ENCODE measurements at regions of chr2 and their contacts with region 1.

Region 1: DNA sequence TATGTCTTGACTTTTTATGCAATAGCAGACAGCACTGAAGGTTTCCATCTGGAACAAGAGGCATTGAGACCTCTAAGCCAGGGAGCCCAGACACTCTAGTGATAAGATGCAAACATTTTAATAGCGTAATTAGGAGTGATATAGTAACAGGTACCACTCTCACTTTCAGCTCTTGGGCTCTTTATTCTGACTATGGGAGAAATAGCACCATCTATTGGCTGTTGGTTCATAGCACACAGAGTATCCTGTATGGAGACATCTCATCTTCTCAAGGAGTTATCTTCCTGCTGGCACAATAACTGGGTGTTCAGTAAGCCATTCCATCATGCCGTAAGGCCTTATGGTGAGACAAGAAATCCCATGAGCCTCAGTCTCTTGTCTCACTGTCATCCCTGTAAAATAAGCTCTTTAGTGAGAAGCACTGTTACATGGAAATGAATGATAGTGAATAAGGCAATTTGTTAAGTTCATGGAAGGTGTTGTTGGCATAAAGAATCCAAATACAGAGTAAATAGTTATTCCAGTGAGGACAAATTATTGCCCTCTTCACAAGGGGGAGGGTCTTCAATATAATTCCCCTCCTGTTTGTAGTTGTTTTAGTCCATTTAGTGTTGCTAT is 48.3 kb downstream of the THUMPD2 start:
- DNase-seq: peak in 1 of 9 experiments; percentile 17
- ATAC-seq: no peak
- H3K4me3 ChIP-seq: no peak overlapping the region
- H3K4me3 Mint-ChIP-seq: no peak overlapping the region
- H3K27ac ChIP-seq: no peak overlapping the region
- H3K27ac Mint-ChIP-seq: no peak overlapping the region
- H3K4me1 ChIP-seq: no peaks in the 10 kb centered on the region
- H3K4me1 Mint-ChIP-seq: no peaks in the 10 kb centered on the region
- H3K27me3 ChIP-seq: no peaks in the 10 kb centered on the region
- H3K27me3 Mint-ChIP-seq: no peaks in the 10 kb centered on the region
- CTCF ChIP-seq: no peak

Region 2: GRCh38 chr2:39069136-39069515 is 661.7 kb before region 1 on chr2:
- CTCF ChIA-PET with region 1: no interaction called
- POLR2A ChIA-PET with region 1: no interaction called
- intact Hi-C with region 1: loop called in 1 of 2 experiments (anchors 10 kb)
- DNase-seq: peak in 2 of 9 experiments; percentile 10 to 26
- ATAC-seq: peak; percentile 31
- H3K4me3 ChIP-seq: no peak overlapping the region
- H3K4me3 Mint-ChIP-seq: no peak overlapping the region
- H3K27ac ChIP-seq: no peak overlapping the region
- H3K27ac Mint-ChIP-seq: peak overlapping the region; percentile 32
- H3K4me1 ChIP-seq: no peaks in the 10 kb centered on the region
- H3K4me1 Mint-ChIP-seq: peaks cover 31% of the 10 kb centered on the region
- H3K27me3 ChIP-seq: no peaks in the 10 kb centered on the region
- H3K27me3 Mint-ChIP-seq: no peaks in the 10 kb centered on the region
- CTCF ChIP-seq: peak; percentile 24

Region 3: DNA sequence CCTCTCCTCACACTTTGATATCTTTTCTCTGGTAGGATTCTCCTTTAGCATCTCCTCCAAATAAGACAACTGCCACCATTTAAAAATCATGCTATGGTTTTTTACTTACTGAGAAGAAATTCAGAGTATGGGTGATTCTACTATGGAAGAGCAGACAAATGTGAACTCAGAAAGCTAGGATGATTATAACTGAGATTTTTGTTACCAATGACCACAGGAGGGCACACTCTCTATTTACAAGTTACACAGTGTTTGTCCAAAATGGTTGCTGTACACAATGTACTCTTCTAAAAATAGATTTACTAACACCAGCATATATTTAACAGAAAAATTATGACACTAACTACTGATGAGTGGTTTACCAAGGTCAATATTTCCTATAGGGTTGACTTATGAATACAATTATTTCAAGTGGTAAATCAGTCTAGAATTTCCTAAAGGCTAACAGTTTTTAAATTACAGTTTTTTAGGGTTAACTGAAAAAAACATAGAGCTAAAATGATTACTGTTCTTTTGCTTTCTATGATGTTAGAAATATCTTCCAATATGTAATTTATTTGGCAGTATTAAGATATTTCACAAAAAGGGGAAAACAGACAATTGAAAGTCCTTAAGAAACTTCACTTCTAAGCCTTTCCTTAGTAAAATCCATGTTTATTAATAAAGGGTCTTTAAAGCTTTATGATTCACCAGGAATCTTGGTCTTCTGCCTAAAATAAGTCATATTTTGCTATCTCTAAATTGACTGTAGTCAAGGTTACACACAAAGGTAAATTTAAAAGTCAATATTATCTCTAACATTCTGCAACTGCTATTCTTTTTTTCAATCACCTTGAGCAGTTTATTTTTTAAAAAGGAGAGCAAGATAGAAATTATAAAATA is 350.9 kb before region 1 on chr2:
- CTCF ChIA-PET with region 1: interaction called, 3 read pairs
- POLR2A ChIA-PET with region 1: no interaction called
- intact Hi-C with region 1: loop called in 1 of 2 experiments (anchors 2 kb)
- DNase-seq: peak in 2 of 9 experiments; percentile 29 to 48
- ATAC-seq: no peak
- H3K4me3 ChIP-seq: no peak overlapping the region
- H3K4me3 Mint-ChIP-seq: no peak overlapping the region
- H3K27ac ChIP-seq: no peak overlapping the region
- H3K27ac Mint-ChIP-seq: no peak overlapping the region
- H3K4me1 ChIP-seq: no peaks in the 10 kb centered on the region
- H3K4me1 Mint-ChIP-seq: peaks cover 24% of the 10 kb centered on the region
- H3K27me3 ChIP-seq: no peaks in the 10 kb centered on the region
- H3K27me3 Mint-ChIP-seq: no peaks in the 10 kb centered on the region
- CTCF ChIP-seq: peak; percentile 51

Region 4: GRCh38 chr2:39855871-39856270 is 125.1 kb after region 1 on chr2:
- CTCF ChIA-PET with region 1: no interaction called
- POLR2A ChIA-PET with region 1: no interaction called
- intact Hi-C with region 1: no loop called
- DNase-seq: no peak
- ATAC-seq: no peak
- H3K4me3 ChIP-seq: no peak overlapping the region
- H3K4me3 Mint-ChIP-seq: no peak overlapping the region
- H3K27ac ChIP-seq: no peak overlapping the region
- H3K27ac Mint-ChIP-seq: no peak overlapping the region
- H3K4me1 ChIP-seq: no peaks in the 10 kb centered on the region
- H3K4me1 Mint-ChIP-seq: peaks cover 10% of the 10 kb centered on the region
- H3K27me3 ChIP-seq: no peaks in the 10 kb centered on the region
- H3K27me3 Mint-ChIP-seq: peaks cover 6% of the 10 kb centered on the region
- CTCF ChIP-seq: no peak

Region 5: GRCh38 chr2:41283079-41283775 is 1552.4 kb after region 1 on chr2:
- CTCF ChIA-PET with region 1: no interaction called
- POLR2A ChIA-PET with region 1: no interaction called
- intact Hi-C with region 1: no loop called
- DNase-seq: no peak
- ATAC-seq: no peak
- H3K4me3 ChIP-seq: no peak overlapping the region
- H3K4me3 Mint-ChIP-seq: no peak overlapping the region
- H3K27ac ChIP-seq: no peak overlapping the region
- H3K27ac Mint-ChIP-seq: no peak overlapping the region
- H3K4me1 ChIP-seq: no peaks in the 10 kb centered on the region
- H3K4me1 Mint-ChIP-seq: no peaks in the 10 kb centered on the region
- H3K27me3 ChIP-seq: no peaks in the 10 kb centered on the region
- H3K27me3 Mint-ChIP-seq: no peaks in the 10 kb centered on the region
- CTCF ChIP-seq: no peak

Measured in CD8-positive, alpha-beta T cell (primary cell).